HepG2 (cell line): ENCODE measurements at regions of chr16 and their contacts with region 1.

Region 1: DNA sequence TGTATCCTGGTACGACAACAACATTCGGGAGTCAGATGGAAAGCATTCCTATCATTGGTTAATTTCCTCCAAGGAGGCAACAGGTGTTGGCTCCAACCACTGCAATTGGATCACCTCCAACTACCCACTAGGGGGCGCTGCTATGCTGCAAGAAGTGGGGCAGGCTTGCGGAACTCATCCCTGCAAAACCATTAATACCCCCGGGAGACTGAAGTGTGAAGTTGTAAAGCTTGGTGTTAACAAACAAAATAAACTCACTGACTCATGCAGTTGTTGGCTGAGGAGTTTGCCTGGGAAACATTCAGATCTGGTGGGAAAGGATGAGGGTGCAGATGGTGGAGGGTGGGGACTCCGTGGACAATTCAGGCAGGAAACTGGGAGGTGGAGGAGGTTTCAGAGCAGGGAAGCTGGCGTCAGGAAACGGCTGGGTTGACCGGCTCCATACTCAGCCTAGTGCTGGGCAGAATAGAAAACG is 84.9 kb downstream of the HS3ST2 start:
- DNase-seq: peak; percentile 70
- ATAC-seq: peak; percentile 93
- H3K4me3 ChIP-seq: no peak overlapping the region
- H3K27ac ChIP-seq: no peak overlapping the region
- H3K4me1 ChIP-seq: no peaks in the 10 kb centered on the region
- H3K27me3 ChIP-seq: peaks cover 3 to 22% of the 10 kb centered on the region in 2 experiments; a peak in 3 of 5 replicates
- CTCF ChIP-seq: peak; percentile 94
- EP300 ChIP-seq: no peak
- POLR2A ChIP-seq: no peak
- RAD21 ChIP-seq: peak; percentile 89

Region 2: GRCh38 chr16:22684574-22685458 is 214.1 kb before region 1 on chr16:
- CTCF ChIA-PET with region 1: no interaction called
- POLR2A ChIA-PET with region 1: no interaction called
- in situ Hi-C with region 1: no loop called
- intact Hi-C with region 1: no loop called
- DNase-seq: no peak
- ATAC-seq: no peak
- H3K4me3 ChIP-seq: no peak overlapping the region
- H3K27ac ChIP-seq: no peak overlapping the region
- H3K4me1 ChIP-seq: peaks cover 5% of the 10 kb centered on the region
- H3K27me3 ChIP-seq: peaks cover 0 to 7% of the 10 kb centered on the region in 2 experiments; a peak in 1 of 5 replicates
- CTCF ChIP-seq: no peak
- EP300 ChIP-seq: no peak
- POLR2A ChIP-seq: no peak
- RAD21 ChIP-seq: no peak

Region 3: GRCh38 chr16:22782314-22782713 is 116.6 kb before region 1 on chr16:
- CTCF ChIA-PET with region 1: no interaction called
- POLR2A ChIA-PET with region 1: no interaction called
- in situ Hi-C with region 1: no loop called
- intact Hi-C with region 1: no loop called
- DNase-seq: no peak
- ATAC-seq: no peak
- H3K4me3 ChIP-seq: no peak overlapping the region
- H3K27ac ChIP-seq: no peak overlapping the region
- H3K4me1 ChIP-seq: no peaks in the 10 kb centered on the region
- H3K27me3 ChIP-seq: peaks cover 2 to 31% of the 10 kb centered on the region in 2 experiments; a peak in 4 of 5 replicates
- CTCF ChIP-seq: no peak
- EP300 ChIP-seq: no peak
- POLR2A ChIP-seq: no peak
- RAD21 ChIP-seq: no peak

Region 4: GRCh38 chr16:22861580-22861979 is 37.3 kb before region 1 on chr16:
- CTCF ChIA-PET with region 1: no interaction called
- POLR2A ChIA-PET with region 1: no interaction called
- in situ Hi-C with region 1: no loop called
- intact Hi-C with region 1: no loop called
- DNase-seq: no peak
- ATAC-seq: no peak
- H3K4me3 ChIP-seq: no peak overlapping the region
- H3K27ac ChIP-seq: no peak overlapping the region
- H3K4me1 ChIP-seq: no peaks in the 10 kb centered on the region
- H3K27me3 ChIP-seq: 0 out of 5 replicates have a peak, but pooled peaks cover 0 to 4% of the 10 kb centered on the region in 2 experiments
- CTCF ChIP-seq: no peak
- EP300 ChIP-seq: no peak
- POLR2A ChIP-seq: no peak
- RAD21 ChIP-seq: no peak

Region 5: DNA sequence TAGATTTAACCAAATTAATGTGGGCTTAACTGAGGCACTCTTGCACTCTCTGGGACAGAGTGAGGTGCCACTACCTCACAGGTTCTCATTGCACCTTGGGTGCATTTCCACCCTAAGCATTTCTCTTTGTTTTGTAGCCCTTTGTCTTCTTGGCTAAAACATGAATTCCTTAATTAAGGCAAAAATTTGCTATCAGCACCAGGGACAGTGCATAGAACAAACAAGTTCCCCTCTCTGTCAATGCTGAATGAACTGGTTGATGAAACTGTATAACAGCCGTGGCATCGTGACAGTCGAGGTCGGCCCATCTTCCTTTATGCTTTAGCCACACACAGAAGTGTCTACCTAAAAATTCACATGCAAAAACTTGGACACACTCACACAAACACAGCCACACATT is 10.1 kb before region 1 on chr16:
- CTCF ChIA-PET with region 1: no interaction called
- POLR2A ChIA-PET with region 1: no interaction called
- in situ Hi-C with region 1: no loop called
- intact Hi-C with region 1: no loop called
- DNase-seq: no peak
- ATAC-seq: no peak
- H3K4me3 ChIP-seq: no peak overlapping the region
- H3K27ac ChIP-seq: no peak overlapping the region
- H3K4me1 ChIP-seq: no peaks in the 10 kb centered on the region
- H3K27me3 ChIP-seq: no peaks in the 10 kb centered on the region; a peak in 1 of 5 replicates
- CTCF ChIP-seq: no peak
- EP300 ChIP-seq: no peak
- POLR2A ChIP-seq: no peak
- RAD21 ChIP-seq: no peak

Region 6: GRCh38 chr16:22948603-22949368 is 49.9 kb after region 1 on chr16:
- CTCF ChIA-PET with region 1: interaction called, 8 read pairs
- POLR2A ChIA-PET with region 1: no interaction called
- in situ Hi-C with region 1: loop called (anchors 5 kb)
- intact Hi-C with region 1: loop called (anchors 2 kb)
- DNase-seq: peak; percentile 82
- ATAC-seq: peak; percentile 92
- H3K4me3 ChIP-seq: no peak overlapping the region
- H3K27ac ChIP-seq: no peak overlapping the region
- H3K4me1 ChIP-seq: 0 out of 2 replicates have a peak, but pooled peaks cover 6% of the 10 kb centered on the region
- H3K27me3 ChIP-seq: peaks cover 0 to 14% of the 10 kb centered on the region in 2 experiments; a peak in 3 of 5 replicates
- CTCF ChIP-seq: peak; percentile 92
- EP300 ChIP-seq: no peak
- POLR2A ChIP-seq: no peak
- RAD21 ChIP-seq: peak; percentile 79

Region 7: DNA sequence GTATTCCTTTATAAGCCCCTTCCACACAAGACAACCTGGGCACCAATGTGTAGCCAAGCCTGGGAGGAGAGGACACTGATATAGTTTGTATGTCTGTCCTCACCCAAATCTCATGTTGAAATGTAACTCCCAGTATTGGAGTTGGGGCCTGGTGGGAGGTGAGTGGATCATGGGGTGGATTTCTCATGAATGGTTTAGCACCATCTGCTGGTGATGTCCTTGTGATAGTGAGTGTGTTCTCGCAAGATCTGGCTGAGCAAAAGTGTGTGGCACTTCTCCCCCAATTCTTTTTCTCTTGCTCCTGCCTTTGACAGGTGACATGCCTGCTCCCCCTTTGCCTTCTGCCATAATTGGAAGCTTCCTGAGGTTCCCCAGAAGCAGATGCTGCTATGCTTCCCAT is 114.6 kb after region 1 on chr16:
- CTCF ChIA-PET with region 1: interaction called, 7 read pairs
- POLR2A ChIA-PET with region 1: no interaction called
- in situ Hi-C with region 1: no loop called
- intact Hi-C with region 1: loop called (anchors 1 kb)
- DNase-seq: peak; percentile 33
- ATAC-seq: peak; percentile 70
- H3K4me3 ChIP-seq: no peak overlapping the region
- H3K27ac ChIP-seq: no peak overlapping the region
- H3K4me1 ChIP-seq: 0 out of 2 replicates have a peak, but pooled peaks cover 6% of the 10 kb centered on the region
- H3K27me3 ChIP-seq: no peaks in the 10 kb centered on the region; a peak in 1 of 5 replicates
- CTCF ChIP-seq: peak; percentile 52
- EP300 ChIP-seq: no peak
- POLR2A ChIP-seq: no peak
- RAD21 ChIP-seq: no peak

Region 8: GRCh38 chr16:23155439-23156049 is 256.6 kb after region 1 on chr16:
- CTCF ChIA-PET with region 1: no interaction called
- POLR2A ChIA-PET with region 1: no interaction called
- in situ Hi-C with region 1: no loop called
- intact Hi-C with region 1: loop called (anchors 5 kb)
- DNase-seq: no peak
- ATAC-seq: peak; percentile 79
- H3K4me3 ChIP-seq: no peak overlapping the region
- H3K27ac ChIP-seq: no peak overlapping the region
- H3K4me1 ChIP-seq: peaks cover 12% of the 10 kb centered on the region
- H3K27me3 ChIP-seq: peaks cover 2 to 15% of the 10 kb centered on the region in 2 experiments; a peak in 2 of 5 replicates
- CTCF ChIP-seq: peak; percentile 78
- EP300 ChIP-seq: no peak
- POLR2A ChIP-seq: no peak
- RAD21 ChIP-seq: 0 out of 2 replicates have a peak, but pooled peaks have one; percentile 10

Region 9: GRCh38 chr16:23435500-23435899 is 536.6 kb after region 1 on chr16:
- CTCF ChIA-PET with region 1: interaction called, 28 read pairs
- POLR2A ChIA-PET with region 1: no interaction called
- in situ Hi-C with region 1: loop called (anchors 10 kb)
- intact Hi-C with region 1: loop called (anchors 1 kb)
- DNase-seq: peak; percentile 77
- ATAC-seq: peak; percentile 98
- H3K4me3 ChIP-seq: no peak overlapping the region
- H3K27ac ChIP-seq: no peak overlapping the region
- H3K4me1 ChIP-seq: no peaks in the 10 kb centered on the region
- H3K27me3 ChIP-seq: no peaks in the 10 kb centered on the region
- CTCF ChIP-seq: peak; percentile 90
- EP300 ChIP-seq: no peak
- POLR2A ChIP-seq: no peak
- RAD21 ChIP-seq: peak; percentile 72